Activated naive CD8-positive, alpha-beta T cell treated with anti-CD3 and anti-CD28 coated beads, Interleukin-2, amount 10 ng/mL, durations not matched to agents 7 days and 5 days (primary cell): ENCODE measurements at regions of chrX and their contacts with region 1.

Region 1: GRCh38 chrX:21839334-21840192 is at the start of gene MBTPS2:
- DNase-seq: peak; percentile 83
- ATAC-seq: peak; percentile 93
- H3K4me3 Mint-ChIP-seq: peak within 1 kb of the TSS; percentile 89
- H3K27ac Mint-ChIP-seq: peak within 1 kb of the TSS; percentile 88
- H3K4me1 Mint-ChIP-seq: peaks cover 3% of the 10 kb centered on the region
- H3K27me3 Mint-ChIP-seq: no peaks in the 10 kb centered on the region
- total RNA-seq, gene MBTPS2: 8.1 to 9.0 TPM

Region 2: DNA sequence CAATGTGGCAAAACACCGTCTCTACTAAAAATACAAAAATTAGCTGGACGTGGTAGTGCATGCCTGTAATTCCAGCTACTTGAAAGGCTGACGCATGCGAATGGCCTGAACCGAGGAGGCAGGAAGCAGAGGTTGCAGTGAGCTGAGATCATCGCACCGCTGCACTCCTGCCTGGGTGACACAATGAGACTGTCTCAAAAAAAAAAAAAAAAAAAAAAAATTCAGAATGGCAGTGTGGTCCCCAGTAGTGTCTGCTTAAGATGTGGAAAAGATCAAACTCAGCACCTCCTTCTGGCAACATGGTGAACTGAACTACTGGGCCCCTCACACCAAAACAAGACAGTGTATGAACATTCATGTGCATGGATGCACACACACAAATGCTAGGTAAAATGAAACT is 133.2 kb after region 1 on chrX:
- POLR2A ChIA-PET with region 1: interaction called, 11 read pairs
- DNase-seq: peak; percentile 38
- ATAC-seq: peak; percentile 94
- H3K4me3 Mint-ChIP-seq: peak overlapping the region; percentile 72
- H3K27ac Mint-ChIP-seq: peak overlapping the region; percentile 92
- H3K4me1 Mint-ChIP-seq: peaks cover 16% of the 10 kb centered on the region
- H3K27me3 Mint-ChIP-seq: no peaks in the 10 kb centered on the region